ENCODE measurements at regions of chr16 and their contacts with region 1.

Region 1: GRCh38 chr16:85615852-85616606 is 2.9 kb downstream of the GSE1 start:
- DNase-seq: peak; percentile 81
- H3K4me3 Mint-ChIP-seq: no peak overlapping the region
- H3K27ac Mint-ChIP-seq: no peak overlapping the region
- H3K4me1 Mint-ChIP-seq: peaks cover 38% of the 10 kb centered on the region
- H3K27me3 Mint-ChIP-seq: peaks cover 77% of the 10 kb centered on the region

Region 2: GRCh38 chr16:85162478-85163277 is 453.4 kb before region 1 on chr16:
- CTCF ChIA-PET with region 1: no interaction called
- DNase-seq: no peak
- H3K4me3 Mint-ChIP-seq: no peak overlapping the region
- H3K27ac Mint-ChIP-seq: no peak overlapping the region
- H3K4me1 Mint-ChIP-seq: peaks cover 6% of the 10 kb centered on the region
- H3K27me3 Mint-ChIP-seq: peaks cover 44% of the 10 kb centered on the region

Region 3: DNA sequence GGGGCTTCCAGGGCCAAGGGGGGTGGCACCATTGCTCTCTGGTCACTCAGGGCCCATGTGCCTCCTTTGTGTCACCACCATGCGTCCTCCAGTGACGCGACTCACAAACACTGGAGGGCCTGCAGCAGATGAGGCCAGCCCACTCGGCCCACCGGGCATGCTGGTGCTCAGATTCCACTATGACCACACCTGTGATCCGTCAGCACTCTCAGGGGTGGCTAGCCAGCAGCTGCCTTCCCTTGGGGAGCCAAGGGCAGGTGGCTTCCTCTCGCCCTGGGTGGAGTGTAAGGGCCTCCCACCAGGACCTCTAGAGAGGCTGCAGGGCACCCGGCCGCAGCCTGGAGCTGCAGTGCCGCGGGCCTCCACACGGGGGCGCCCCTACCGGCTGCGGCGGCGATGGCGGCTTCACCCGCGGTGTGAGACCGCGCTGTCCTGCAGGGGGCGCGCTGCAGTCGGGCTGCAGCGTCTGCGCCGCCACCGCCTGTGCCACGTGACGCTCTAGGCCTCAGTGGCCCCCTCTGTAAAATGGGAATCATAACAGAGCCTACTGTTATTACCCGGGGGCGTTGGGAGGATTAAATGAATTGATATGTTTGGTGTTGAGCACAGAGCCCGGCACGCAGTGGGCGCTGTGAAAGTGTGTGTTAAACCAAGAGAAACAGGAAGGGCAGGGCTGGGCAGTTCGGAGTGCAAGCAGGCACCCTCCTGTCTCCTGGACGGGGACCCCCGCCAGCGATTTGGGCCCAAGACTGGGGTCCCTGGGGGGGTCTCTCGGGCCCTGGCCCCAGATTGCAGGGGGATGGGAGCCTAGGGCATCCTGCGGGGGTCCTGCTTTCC is 195.3 kb before region 1 on chr16:
- CTCF ChIA-PET with region 1: interaction called, 93 read pairs
- DNase-seq: peak; percentile 76
- H3K4me3 Mint-ChIP-seq: no peak overlapping the region
- H3K27ac Mint-ChIP-seq: no peak overlapping the region
- H3K4me1 Mint-ChIP-seq: peaks cover 5% of the 10 kb centered on the region
- H3K27me3 Mint-ChIP-seq: peaks cover 26% of the 10 kb centered on the region

Region 4: DNA sequence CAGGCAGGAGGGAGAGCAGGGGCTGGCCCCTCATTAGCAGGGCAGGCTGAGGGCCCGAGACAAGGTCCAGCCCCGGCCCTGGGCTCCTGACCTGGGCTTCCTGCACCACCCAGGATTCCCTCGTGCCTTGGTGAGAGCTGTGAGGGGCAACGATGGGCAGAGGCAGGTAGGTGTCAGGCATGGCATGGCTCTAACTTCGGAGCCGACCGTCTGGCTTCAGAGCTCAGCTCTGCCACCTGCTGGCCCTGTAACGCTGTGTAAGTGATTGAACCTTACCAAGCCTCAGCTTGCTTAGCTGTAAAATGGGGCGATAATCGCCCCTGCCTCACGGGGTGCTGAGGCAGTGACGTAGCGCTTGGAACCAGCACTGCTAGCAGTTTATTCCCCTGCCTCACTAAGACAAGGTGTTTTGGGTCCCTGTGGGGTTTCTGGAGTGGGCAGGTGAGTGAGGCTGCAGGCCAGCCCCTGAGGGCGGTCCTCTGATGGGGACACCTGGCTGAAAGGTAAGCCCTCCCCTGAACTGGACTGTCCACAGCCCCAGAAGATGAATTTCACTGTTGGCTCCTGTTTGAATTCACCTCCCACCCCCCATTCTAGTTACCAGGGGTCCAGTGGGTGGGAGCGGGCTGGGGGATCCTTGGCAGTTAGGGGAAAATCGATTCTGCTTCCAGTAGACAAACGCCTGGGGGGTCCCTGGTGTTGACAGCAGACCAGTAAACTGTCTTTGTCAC is 187.7 kb before region 1 on chr16:
- CTCF ChIA-PET with region 1: interaction called, 19 read pairs
- DNase-seq: peak; percentile 72
- H3K4me3 Mint-ChIP-seq: no peak overlapping the region
- H3K27ac Mint-ChIP-seq: no peak overlapping the region
- H3K4me1 Mint-ChIP-seq: no peaks in the 10 kb centered on the region
- H3K27me3 Mint-ChIP-seq: peaks cover 30% of the 10 kb centered on the region

Region 5: DNA sequence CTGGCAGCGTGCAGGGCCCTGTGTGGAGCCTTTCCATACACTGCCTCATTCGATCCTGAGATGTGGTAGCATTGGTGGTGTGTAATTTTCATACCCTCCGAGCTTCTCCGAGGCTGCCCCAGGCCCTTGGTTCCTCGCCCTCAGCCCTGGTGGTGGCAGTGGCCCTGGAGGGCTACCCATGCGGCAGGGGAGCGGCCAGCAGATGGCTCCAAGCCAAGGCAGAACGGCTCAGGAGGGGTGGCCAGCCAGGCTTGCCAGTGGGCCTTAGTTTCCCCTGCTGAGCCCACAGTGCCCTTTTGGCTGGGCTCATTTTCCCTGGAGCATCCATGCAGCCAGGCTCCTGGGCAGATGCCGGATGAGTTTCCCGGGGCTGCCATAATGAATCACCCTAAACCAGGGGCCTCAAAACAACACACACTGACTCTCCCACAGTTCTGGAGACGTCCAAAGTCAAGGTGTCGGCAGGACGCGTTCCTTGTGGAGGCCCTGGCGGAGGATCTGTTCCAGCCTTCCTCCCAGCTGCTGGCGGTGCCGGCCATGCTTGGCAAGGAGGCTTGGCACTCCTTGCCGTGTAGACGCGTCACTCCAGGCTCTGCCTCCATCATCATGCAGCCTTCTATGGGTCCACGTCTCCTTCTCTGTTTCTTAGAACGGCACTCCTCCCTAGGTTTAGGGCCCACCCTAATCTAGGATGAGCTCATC is 161.7 kb before region 1 on chr16:
- CTCF ChIA-PET with region 1: no interaction called
- DNase-seq: no peak
- H3K4me3 Mint-ChIP-seq: no peak overlapping the region
- H3K27ac Mint-ChIP-seq: no peak overlapping the region
- H3K4me1 Mint-ChIP-seq: peaks cover 9% of the 10 kb centered on the region
- H3K27me3 Mint-ChIP-seq: peaks cover 46% of the 10 kb centered on the region

Region 6: DNA sequence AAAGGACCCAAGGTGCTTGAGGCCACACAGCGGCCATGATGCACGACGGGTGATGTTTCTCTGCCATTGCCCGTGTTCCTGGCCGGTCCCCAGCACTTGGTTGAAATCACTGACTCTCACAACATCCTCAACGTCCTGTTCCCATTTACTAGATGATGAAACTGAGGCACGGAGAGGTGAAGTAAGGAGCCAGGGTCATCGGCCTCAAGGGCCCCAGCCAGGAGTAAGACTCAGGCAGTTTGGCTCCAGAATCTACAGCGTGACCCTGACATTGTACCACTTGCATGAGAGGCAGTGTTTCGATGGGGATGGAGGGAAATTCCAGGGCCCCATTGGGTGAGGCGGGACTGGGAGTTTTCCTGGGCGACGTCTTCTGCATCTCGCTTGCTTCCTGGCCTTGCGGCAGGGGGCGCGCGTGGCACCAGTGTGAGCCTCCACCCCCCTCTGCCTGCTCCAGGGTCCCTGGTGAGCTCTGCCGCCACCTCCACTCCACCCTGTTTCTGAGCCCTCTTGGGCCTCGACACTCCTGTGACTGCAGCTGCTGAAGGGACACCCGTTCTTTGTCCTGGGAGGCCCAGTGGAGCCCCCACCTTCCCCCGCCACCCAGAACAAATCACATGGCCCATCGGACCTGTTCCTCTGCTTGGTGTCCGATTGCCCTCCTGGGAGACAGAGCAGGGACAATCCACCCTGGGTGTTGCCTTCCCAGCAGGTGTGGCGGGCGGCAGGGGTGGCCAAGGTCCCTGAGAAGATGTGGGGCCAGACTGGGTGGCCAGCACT is 135.9 kb before region 1 on chr16:
- CTCF ChIA-PET with region 1: interaction called, 11 read pairs
- DNase-seq: no peak
- H3K4me3 Mint-ChIP-seq: no peak overlapping the region
- H3K27ac Mint-ChIP-seq: no peak overlapping the region
- H3K4me1 Mint-ChIP-seq: no peaks in the 10 kb centered on the region
- H3K27me3 Mint-ChIP-seq: peaks cover 3% of the 10 kb centered on the region

Region 7: GRCh38 chr16:85491058-85491771 is 124.8 kb before region 1 on chr16:
- CTCF ChIA-PET with region 1: interaction called, 29 read pairs
- DNase-seq: peak; percentile 62
- H3K4me3 Mint-ChIP-seq: no peak overlapping the region
- H3K27ac Mint-ChIP-seq: peak overlapping the region; percentile 55
- H3K4me1 Mint-ChIP-seq: peaks cover 11% of the 10 kb centered on the region
- H3K27me3 Mint-ChIP-seq: peaks cover 23% of the 10 kb centered on the region

Region 8: DNA sequence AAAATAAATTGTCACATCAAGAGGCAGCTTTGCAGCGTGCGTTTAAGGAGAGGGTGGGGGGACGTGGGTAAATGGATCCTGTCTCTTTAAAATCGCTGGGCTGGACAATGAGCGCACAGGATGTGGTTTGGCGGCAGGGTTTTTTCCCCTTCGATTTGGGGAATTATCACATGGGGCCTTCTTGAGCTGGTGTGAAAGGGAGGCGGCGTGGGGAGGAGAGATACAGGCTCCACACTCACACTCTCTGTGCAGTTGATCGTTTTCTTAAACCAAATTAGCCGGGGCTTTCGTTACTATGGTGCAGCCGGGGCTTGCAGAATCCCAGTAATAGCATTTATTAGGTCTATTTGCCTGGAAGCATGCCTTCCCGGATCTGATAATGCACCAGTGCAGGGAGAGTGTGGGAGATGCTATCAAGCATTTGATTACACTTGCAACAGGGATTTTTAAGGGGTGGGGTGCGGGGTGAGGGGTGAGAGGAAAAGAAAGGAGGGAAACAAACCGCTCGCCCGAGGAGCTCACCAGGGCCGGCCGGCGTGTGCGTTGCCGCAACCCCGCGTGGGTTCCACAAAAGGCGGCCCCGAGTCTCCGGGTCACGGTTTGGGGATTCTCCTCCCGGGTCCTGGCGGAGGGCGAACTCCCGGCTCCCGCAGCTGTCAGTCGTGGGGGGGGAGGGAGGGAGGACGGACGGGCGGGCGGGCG is 61.8 kb before region 1 on chr16:
- CTCF ChIA-PET with region 1: interaction called, 14 read pairs
- DNase-seq: peak; percentile 88
- H3K4me3 Mint-ChIP-seq: peak overlapping the region; percentile 81
- H3K27ac Mint-ChIP-seq: peak overlapping the region; percentile 93
- H3K4me1 Mint-ChIP-seq: peaks cover 39% of the 10 kb centered on the region
- H3K27me3 Mint-ChIP-seq: peaks cover 43% of the 10 kb centered on the region

Region 9: GRCh38 chr16:85724126-85724879 is 108.3 kb after region 1 on chr16:
- CTCF ChIA-PET with region 1: no interaction called
- DNase-seq: no peak
- H3K4me3 Mint-ChIP-seq: no peak overlapping the region
- H3K27ac Mint-ChIP-seq: no peak overlapping the region
- H3K4me1 Mint-ChIP-seq: no peaks in the 10 kb centered on the region
- H3K27me3 Mint-ChIP-seq: no peaks in the 10 kb centered on the region